ENCODE measurements at regions of chr3 and their contacts with region 1.

Region 1: DNA sequence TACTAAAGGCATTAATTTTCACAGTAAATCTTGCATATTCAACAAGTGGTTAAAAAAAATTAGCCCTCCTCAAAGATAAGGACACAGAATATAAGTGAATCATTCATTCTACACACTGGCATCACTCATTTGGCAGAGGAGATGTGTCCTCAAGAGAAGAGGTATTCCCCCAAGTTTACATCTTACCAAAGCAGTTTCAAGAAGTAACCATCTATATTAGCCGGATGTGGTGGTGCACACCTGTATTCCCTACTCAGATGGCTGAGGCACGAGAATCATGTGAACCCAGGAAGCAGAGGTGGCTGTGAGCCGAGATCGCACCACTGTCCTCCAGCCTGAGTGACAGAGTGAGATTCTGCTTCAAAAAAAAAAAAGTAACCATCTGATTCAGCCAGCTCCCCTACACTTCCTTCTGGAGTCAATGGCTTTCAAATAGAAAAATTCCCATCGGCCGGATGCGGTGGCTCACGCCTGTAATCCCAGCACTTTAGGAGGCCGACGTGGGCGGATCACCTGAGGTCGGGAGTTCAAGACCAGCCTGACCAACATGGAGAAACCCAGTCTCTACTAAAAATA is 15.4 kb downstream of the RAF1 start:
- DNase-seq: no peak
- ATAC-seq: no peak
- H3K4me3 ChIP-seq: no peak overlapping the region
- H3K27ac ChIP-seq: no peak overlapping the region
- H3K4me1 ChIP-seq: no peaks in the 10 kb centered on the region; the same call in 1 of the 2 replicates
- H3K27me3 ChIP-seq: no peaks in the 10 kb centered on the region
- CTCF ChIP-seq: no peak

Region 2: DNA sequence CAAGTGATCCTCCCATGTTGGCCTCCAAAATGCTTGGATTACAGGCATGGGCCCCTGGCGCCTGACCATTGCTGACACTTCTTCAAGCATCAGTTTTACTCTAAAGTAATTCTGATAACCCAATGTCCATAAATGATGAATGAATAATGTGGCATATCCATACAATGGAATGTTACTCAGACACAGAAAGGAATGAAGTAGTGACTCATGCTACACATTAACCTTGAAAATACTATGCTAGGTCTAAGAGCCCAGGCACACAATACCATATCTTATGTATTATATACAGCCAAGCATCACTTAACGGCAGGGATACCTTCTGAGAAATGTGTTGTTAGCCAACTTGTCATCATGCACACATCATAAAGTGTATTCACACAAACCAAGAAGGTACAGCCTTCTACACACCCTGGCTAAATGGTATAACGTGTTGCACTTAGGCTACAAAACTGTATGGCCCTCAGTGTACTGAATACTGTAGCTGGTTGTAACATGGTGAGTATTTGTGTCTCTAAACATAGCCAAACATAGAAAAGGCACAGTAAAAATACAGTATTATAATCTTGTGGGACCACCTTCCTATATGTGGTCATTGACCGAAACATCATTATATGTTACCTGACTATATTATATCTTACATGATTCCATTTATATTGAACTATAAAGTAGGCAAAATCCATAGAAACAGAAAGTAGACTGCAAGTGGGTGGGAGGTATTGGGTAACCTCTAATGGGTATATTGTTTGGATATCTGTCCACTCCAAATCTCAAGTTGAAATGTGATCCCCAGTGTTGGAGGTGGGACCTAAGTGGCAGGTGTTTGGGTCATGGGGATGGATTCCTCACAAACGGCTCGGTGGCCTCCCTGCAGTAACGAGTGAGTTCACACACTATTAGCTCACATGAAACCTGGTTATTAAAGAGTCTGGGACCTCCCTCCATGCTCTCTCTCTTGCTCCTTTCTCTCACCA is 60.1 kb before region 1 on chr3:
- CTCF ChIA-PET with region 1: no interaction called
- POLR2A ChIA-PET with region 1: interaction called, 19 read pairs
- in situ Hi-C with region 1: no loop called
- intact Hi-C with region 1: no loop called
- DNase-seq: no peak
- ATAC-seq: no peak
- H3K4me3 ChIP-seq: no peak overlapping the region
- H3K27ac ChIP-seq: no peak overlapping the region
- H3K4me1 ChIP-seq: no peaks in the 10 kb centered on the region
- H3K27me3 ChIP-seq: no peaks in the 10 kb centered on the region
- CTCF ChIP-seq: no peak

Region 3: DNA sequence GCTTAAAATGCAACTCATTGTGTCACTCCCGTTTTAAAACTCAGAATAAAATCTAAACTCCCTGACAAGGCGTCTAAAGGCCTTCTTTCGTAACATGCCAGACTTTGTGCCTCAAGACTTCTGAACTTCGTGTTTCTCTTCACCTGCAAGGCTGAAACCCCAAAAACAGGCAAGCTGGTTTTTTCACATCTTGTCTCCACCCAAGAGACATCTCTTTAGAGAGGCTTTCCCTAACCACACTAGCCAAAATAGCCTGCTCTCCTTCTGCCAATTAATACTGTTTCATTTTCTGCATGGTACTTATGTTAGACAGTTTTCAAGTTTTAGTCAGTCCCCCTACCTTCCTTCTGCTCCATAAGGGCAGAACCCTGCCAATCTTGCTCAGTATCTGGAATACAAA is 26.1 kb before region 1 on chr3:
- CTCF ChIA-PET with region 1: no interaction called
- POLR2A ChIA-PET with region 1: no interaction called
- in situ Hi-C with region 1: no loop called
- intact Hi-C with region 1: no loop called
- DNase-seq: no peak
- ATAC-seq: no peak
- H3K4me3 ChIP-seq: no peak overlapping the region
- H3K27ac ChIP-seq: no peak overlapping the region
- H3K4me1 ChIP-seq: no peaks in the 10 kb centered on the region
- H3K27me3 ChIP-seq: no peaks in the 10 kb centered on the region
- CTCF ChIP-seq: no peak

Region 4: GRCh38 chr3:12719984-12720898 is 71.8 kb after region 1 on chr3:
- CTCF ChIA-PET with region 1: interaction called, 3 read pairs
- POLR2A ChIA-PET with region 1: interaction called, 15 read pairs
- in situ Hi-C with region 1: no loop called
- intact Hi-C with region 1: no loop called
- DNase-seq: peak; percentile 57
- ATAC-seq: peak; percentile 88
- H3K4me3 ChIP-seq: peak overlapping the region; percentile 42 to 70
- H3K27ac ChIP-seq: no peak overlapping the region
- H3K4me1 ChIP-seq: no peaks in the 10 kb centered on the region; the same call in 1 of the 2 replicates
- H3K27me3 ChIP-seq: no peaks in the 10 kb centered on the region
- CTCF ChIP-seq: peak; percentile 89

Region 5: DNA sequence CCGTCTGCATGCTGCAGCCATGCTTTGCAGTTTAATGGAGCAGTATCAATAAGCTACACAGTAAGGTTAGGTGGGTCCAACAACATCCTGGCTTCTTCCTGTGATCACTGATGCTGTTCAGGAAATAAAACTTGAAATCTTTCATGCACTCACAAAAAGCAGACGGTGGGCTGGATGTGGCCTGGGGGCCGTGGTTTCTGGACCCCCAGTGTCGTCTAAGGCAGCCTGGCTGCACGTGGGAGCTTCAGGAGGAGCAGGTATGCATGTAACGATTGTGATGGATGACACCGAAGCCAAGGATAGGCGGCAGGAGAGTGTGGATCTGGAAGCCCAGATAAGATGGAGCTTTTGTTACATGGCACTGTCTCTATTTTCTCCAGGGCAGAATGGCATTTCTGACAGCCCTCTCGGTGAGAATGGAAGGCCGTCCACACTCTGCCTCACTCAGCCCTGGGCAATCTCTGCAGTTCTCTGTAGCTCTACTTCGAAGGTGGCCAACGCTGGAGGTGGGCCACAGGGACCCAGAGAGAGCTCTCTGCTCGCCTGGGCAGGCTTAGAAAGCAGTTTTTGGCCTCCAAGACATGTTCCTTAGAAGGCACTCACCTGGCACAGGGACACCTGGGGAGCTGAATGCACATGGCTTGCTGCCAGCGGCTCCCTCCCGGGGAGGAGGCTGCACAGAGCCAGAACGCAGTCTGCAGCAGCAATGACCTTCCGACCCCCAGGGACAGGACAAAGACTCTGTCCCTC is 471.2 kb after region 1 on chr3:
- CTCF ChIA-PET with region 1: no interaction called
- POLR2A ChIA-PET with region 1: no interaction called
- in situ Hi-C with region 1: no loop called
- intact Hi-C with region 1: no loop called
- DNase-seq: no peak
- ATAC-seq: no peak
- H3K4me3 ChIP-seq: no peak overlapping the region
- H3K27ac ChIP-seq: no peak overlapping the region
- H3K4me1 ChIP-seq: no peaks in the 10 kb centered on the region
- H3K27me3 ChIP-seq: no peaks in the 10 kb centered on the region
- CTCF ChIP-seq: no peak

Measured in Panc1 (cell line).